Endothelial cell of umbilical vein (primary cell): ENCODE measurements at regions of chr20 and their contacts with region 1.

Region 1: DNA sequence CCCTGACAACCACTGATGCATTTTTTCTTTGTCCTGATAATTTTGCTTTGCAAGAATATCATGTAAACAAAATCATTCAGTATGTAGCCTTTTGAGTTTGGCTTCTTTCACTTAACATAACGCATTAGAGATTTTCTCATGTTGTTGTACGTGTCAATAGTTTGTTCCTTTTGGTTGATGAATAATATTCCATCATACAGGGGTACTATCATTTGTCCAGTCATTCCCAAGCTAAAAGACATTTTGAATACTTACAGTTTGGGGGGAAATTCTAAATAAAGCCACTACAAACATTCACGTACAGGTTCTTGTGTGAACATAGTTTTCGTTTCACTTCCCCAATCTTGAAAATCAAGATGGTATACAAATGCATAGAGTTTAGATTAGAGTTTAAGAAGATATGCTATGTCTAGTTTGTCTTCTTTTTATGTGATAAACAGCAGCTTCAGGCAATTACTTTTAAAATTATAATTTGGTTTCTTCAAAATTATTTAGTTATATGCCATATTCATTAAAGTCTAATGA is 5.2 kb downstream of the HAO1 start:
- DNase-seq: no peak
- H3K4me3 ChIP-seq: no peak overlapping the region
- H3K27ac ChIP-seq: no peak overlapping the region
- H3K4me1 ChIP-seq: peaks cover 10% of the 10 kb centered on the region
- H3K27me3 ChIP-seq: no peaks in the 10 kb centered on the region
- CTCF ChIP-seq: no peak
- POLR2A ChIP-seq: no peak

Region 2: GRCh38 chr20:7967199-7967844 is 32.2 kb after region 1 on chr20:
- CTCF ChIA-PET with region 1: interaction called, 15 read pairs
- POLR2A ChIA-PET with region 1: no interaction called
- dilution Hi-C with region 1: no loop called
- intact Hi-C with region 1: no loop called
- DNase-seq: no peak
- H3K4me3 ChIP-seq: no peak overlapping the region
- H3K27ac ChIP-seq: no peak overlapping the region
- H3K4me1 ChIP-seq: no peaks in the 10 kb centered on the region
- H3K27me3 ChIP-seq: no peaks in the 10 kb centered on the region
- CTCF ChIP-seq: no peak
- POLR2A ChIP-seq: no peak

Region 3: GRCh38 chr20:7980332-7981046 is 45.4 kb after region 1 on chr20:
- CTCF ChIA-PET with region 1: interaction called, 29 read pairs
- POLR2A ChIA-PET with region 1: no interaction called
- dilution Hi-C with region 1: no loop called
- intact Hi-C with region 1: no loop called
- DNase-seq: peak; percentile 58
- H3K4me3 ChIP-seq: no peak overlapping the region
- H3K27ac ChIP-seq: no peak overlapping the region
- H3K4me1 ChIP-seq: no peaks in the 10 kb centered on the region
- H3K27me3 ChIP-seq: no peaks in the 10 kb centered on the region
- CTCF ChIP-seq: peak; percentile 52 to 53
- POLR2A ChIP-seq: no peak

Region 4: GRCh38 chr20:7989379-7989778 is 54.3 kb after region 1 on chr20:
- CTCF ChIA-PET with region 1: interaction called, 71 read pairs
- POLR2A ChIA-PET with region 1: interaction called, 6 read pairs
- dilution Hi-C with region 1: no loop called
- intact Hi-C with region 1: loop called (anchors 1 kb)
- DNase-seq: peak; percentile 11
- H3K4me3 ChIP-seq: no peak overlapping the region
- H3K27ac ChIP-seq: no peak overlapping the region
- H3K4me1 ChIP-seq: no peaks in the 10 kb centered on the region
- H3K27me3 ChIP-seq: no peaks in the 10 kb centered on the region
- CTCF ChIP-seq: no peak
- POLR2A ChIP-seq: no peak

Region 5: GRCh38 chr20:8019246-8019997 is 84.3 kb after region 1 on chr20 and contains the start of gene TMX4:
- CTCF ChIA-PET with region 1: interaction called, 4 read pairs
- POLR2A ChIA-PET with region 1: no interaction called
- dilution Hi-C with region 1: no loop called
- intact Hi-C with region 1: loop called (anchors 2 kb)
- DNase-seq: peak; percentile 97
- H3K4me3 ChIP-seq: peak within 1 kb of the TSS; percentile 76 to 88 (median 82)
- H3K27ac ChIP-seq: peak within 1 kb of the TSS; percentile 64
- H3K4me1 ChIP-seq: peaks cover 8% of the 10 kb centered on the region
- H3K27me3 ChIP-seq: no peaks in the 10 kb centered on the region
- CTCF ChIP-seq: peak; percentile 13 to 74
- POLR2A ChIP-seq: peak; percentile 95
- total RNA-seq, gene TMX4: 26.9 and 30.3 TPM in 2 replicates

Region 6: GRCh38 chr20:8116067-8116811 is 181.2 kb after region 1 on chr20:
- CTCF ChIA-PET with region 1: no interaction called
- POLR2A ChIA-PET with region 1: no interaction called
- dilution Hi-C with region 1: no loop called
- intact Hi-C with region 1: no loop called
- DNase-seq: peak; percentile 52
- H3K4me3 ChIP-seq: no peak overlapping the region
- H3K27ac ChIP-seq: no peak overlapping the region
- H3K4me1 ChIP-seq: peaks cover 17% of the 10 kb centered on the region
- H3K27me3 ChIP-seq: no peaks in the 10 kb centered on the region
- CTCF ChIP-seq: no peak
- POLR2A ChIP-seq: no peak

Region 7: DNA sequence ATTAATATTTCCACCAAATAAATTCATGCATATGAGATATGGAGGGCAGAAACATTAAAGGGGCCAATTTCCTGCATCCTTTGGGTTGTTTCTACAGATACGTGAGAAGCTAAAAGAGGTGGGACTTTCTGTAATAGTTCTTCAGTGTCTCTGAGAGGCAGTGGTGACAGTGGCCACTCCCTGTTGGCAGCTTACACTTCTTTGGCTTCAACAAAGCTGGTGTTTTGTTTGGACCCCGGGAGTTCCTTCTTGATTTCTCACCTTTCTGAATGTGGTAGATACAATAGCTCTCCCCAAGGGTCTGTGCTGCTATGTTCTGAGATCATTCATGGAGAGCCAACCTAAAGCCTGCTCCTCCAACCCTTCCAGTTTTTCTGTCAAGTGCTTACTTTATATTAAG is 204.8 kb after region 1 on chr20:
- CTCF ChIA-PET with region 1: no interaction called
- POLR2A ChIA-PET with region 1: no interaction called
- dilution Hi-C with region 1: no loop called
- intact Hi-C with region 1: no loop called
- DNase-seq: no peak
- H3K4me3 ChIP-seq: no peak overlapping the region
- H3K27ac ChIP-seq: no peak overlapping the region
- H3K4me1 ChIP-seq: peaks cover 13% of the 10 kb centered on the region
- H3K27me3 ChIP-seq: no peaks in the 10 kb centered on the region
- CTCF ChIP-seq: no peak
- POLR2A ChIP-seq: no peak

Region 8: GRCh38 chr20:8389381-8390036 is 454.4 kb after region 1 on chr20:
- CTCF ChIA-PET with region 1: interaction called, 11 read pairs
- POLR2A ChIA-PET with region 1: no interaction called
- dilution Hi-C with region 1: no loop called
- intact Hi-C with region 1: loop called (anchors 10 kb)
- DNase-seq: peak; percentile 61
- H3K4me3 ChIP-seq: no peak overlapping the region
- H3K27ac ChIP-seq: no peak overlapping the region
- H3K4me1 ChIP-seq: peaks cover 3% of the 10 kb centered on the region
- H3K27me3 ChIP-seq: no peaks in the 10 kb centered on the region
- CTCF ChIP-seq: peak; percentile 6 to 20
- POLR2A ChIP-seq: no peak

Region 9: GRCh38 chr20:8535403-8536261 is 600.5 kb after region 1 on chr20:
- CTCF ChIA-PET with region 1: interaction called, 10 read pairs
- POLR2A ChIA-PET with region 1: no interaction called
- dilution Hi-C with region 1: no loop called
- intact Hi-C with region 1: no loop called
- DNase-seq: peak; percentile 29
- H3K4me3 ChIP-seq: no peak overlapping the region
- H3K27ac ChIP-seq: no peak overlapping the region
- H3K4me1 ChIP-seq: peaks cover 9% of the 10 kb centered on the region
- H3K27me3 ChIP-seq: no peaks in the 10 kb centered on the region
- CTCF ChIP-seq: peak; percentile 49 to 60
- POLR2A ChIP-seq: no peak